Vagina (tissue), 2 donors: ENCODE measurements at regions of chrX and their contacts with region 1.

Region 1: GRCh38 chrX:40945361-40945713 is 139.9 kb upstream of the USP9X start:
- DNase-seq: no peak
- H3K4me3 ChIP-seq: no peak overlapping the region
- H3K27ac ChIP-seq: peak overlapping the region; percentile 9
- H3K4me1 ChIP-seq: no peaks in the 10 kb centered on the region
- H3K27me3 ChIP-seq: no peaks in the 10 kb centered on the region
- CTCF ChIP-seq: no peak
- POLR2A ChIP-seq: no peak

Region 2: DNA sequence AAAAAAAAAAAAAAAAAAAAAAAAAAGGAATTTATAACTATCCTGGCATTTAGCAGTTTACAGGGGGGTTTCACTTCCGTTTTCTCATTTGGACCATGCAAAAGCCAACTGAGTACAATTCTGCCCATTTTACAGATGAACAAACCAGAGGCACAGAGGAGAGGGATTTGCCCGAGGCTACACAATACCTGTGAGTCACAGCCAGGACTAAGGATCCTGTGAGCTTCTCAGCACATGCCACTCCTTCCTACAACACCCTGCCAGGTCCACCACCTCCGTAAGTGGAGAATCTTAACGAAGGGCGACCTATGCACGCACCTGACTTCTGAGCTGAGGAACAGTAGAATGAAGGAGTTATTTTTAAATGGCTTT is 64.5 kb after region 1 on chrX:
- intact Hi-C with region 1: loop called (anchors 5 kb)
- DNase-seq: no peak
- H3K4me3 ChIP-seq: peak overlapping the region; percentile 30 to 32
- H3K27ac ChIP-seq: peak overlapping the region; percentile 78
- H3K4me1 ChIP-seq: peaks cover 12% of the 10 kb centered on the region
- H3K27me3 ChIP-seq: no peaks in the 10 kb centered on the region
- CTCF ChIP-seq: no peak
- POLR2A ChIP-seq: no peak